ENCODE measurements at regions of chr1 and their contacts with region 1.

Region 1: GRCh38 chr1:200861937-200862647 is 10.7 kb upstream of the GPR25 start:
- DNase-seq: peak in 1 of 35 experiments; percentile 56
- ATAC-seq: peak; percentile 46 to 80 (median 48)
- H3K4me3 ChIP-seq: no peak overlapping the region
- H3K4me3 Mint-ChIP-seq: peak overlapping the region in 2 of 3 donors; percentile 1 to 31
- H3K27ac ChIP-seq: peak overlapping the region; percentile 57
- H3K27ac Mint-ChIP-seq: peak overlapping the region; percentile 41 to 85
- H3K4me1 ChIP-seq: peaks cover 0 to 22% of the 10 kb centered on the region in 2 experiments
- H3K4me1 Mint-ChIP-seq: peaks cover 10 to 45% (median 23%) of the 10 kb centered on the region in 3 donors
- H3K27me3 ChIP-seq: no peaks in the 10 kb centered on the region
- H3K27me3 Mint-ChIP-seq: no peaks in the 10 kb centered on the region

Region 2: DNA sequence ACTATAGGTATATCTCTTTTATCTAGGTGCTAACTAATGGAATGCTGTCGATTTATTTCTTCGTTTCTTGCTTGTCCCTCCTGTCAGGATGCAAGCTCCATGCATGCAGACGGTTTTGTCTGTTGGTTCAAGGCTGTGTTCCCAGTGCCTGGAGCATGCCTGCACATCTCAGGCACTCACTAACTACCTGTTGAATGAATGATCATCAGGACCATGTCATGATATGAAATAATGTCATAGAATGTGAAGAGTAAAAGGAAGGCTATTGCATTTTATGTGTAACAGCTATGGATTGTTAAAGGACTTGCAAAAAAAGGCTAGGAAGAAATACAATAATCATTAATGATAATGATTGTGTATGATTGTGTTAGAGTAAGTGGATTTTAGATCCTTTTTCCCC is 14.9 kb after region 1 on chr1:
- CTCF ChIA-PET with region 1: interaction called in 1 of 2 experiments, 6 read pairs
- POLR2A ChIA-PET with region 1: interaction called in 1 of 2 experiments, 10 read pairs
- DNase-seq: no peak
- ATAC-seq: no peak
- H3K4me3 ChIP-seq: no peak overlapping the region
- H3K4me3 Mint-ChIP-seq: peak overlapping the region in 1 of 3 donors; percentile 28
- H3K27ac ChIP-seq: no peak overlapping the region
- H3K27ac Mint-ChIP-seq: peak overlapping the region in 1 of 2 donors; percentile 88
- H3K4me1 ChIP-seq: peaks cover 6 to 53% of the 10 kb centered on the region in 2 experiments
- H3K4me1 Mint-ChIP-seq: peaks cover 38 to 67% (median 45%) of the 10 kb centered on the region in 3 donors
- H3K27me3 ChIP-seq: peaks cover under 1 to 28% of the 10 kb centered on the region in 2 experiments
- H3K27me3 Mint-ChIP-seq: peaks cover 24 to 29% of the 10 kb centered on the region in 2 donors

Region 3: GRCh38 chr1:200903793-200904192 is 41.7 kb after region 1 on chr1:
- CTCF ChIA-PET with region 1: no interaction called
- POLR2A ChIA-PET with region 1: no interaction called
- DNase-seq: peak in 1 of 35 experiments; percentile 34
- ATAC-seq: no peak
- H3K4me3 ChIP-seq: no peak overlapping the region
- H3K4me3 Mint-ChIP-seq: no peak overlapping the region
- H3K27ac ChIP-seq: no peak overlapping the region
- H3K27ac Mint-ChIP-seq: no peak overlapping the region
- H3K4me1 ChIP-seq: peaks cover 3 to 30% of the 10 kb centered on the region in 2 experiments
- H3K4me1 Mint-ChIP-seq: peaks cover 19 to 32% (median 23%) of the 10 kb centered on the region in 3 donors
- H3K27me3 ChIP-seq: peaks cover 0 to 47% of the 10 kb centered on the region in 2 experiments
- H3K27me3 Mint-ChIP-seq: peaks cover 3 to 4% of the 10 kb centered on the region in 2 donors

Region 4: GRCh38 chr1:202625416-202626360 is 1763.6 kb after region 1 on chr1:
- CTCF ChIA-PET with region 1: interaction called in 1 of 2 experiments, 12 read pairs
- POLR2A ChIA-PET with region 1: no interaction called
- DNase-seq: peak; percentile 13 to 70 (median 46)
- ATAC-seq: peak; percentile 46 to 54 (median 52)
- H3K4me3 ChIP-seq: no peak overlapping the region
- H3K4me3 Mint-ChIP-seq: no peak overlapping the region
- H3K27ac ChIP-seq: no peak overlapping the region
- H3K27ac Mint-ChIP-seq: no peak overlapping the region
- H3K4me1 ChIP-seq: peaks cover 6 to 59% of the 10 kb centered on the region in 2 experiments
- H3K4me1 Mint-ChIP-seq: peaks cover 40 to 47% (median 43%) of the 10 kb centered on the region in 3 donors
- H3K27me3 ChIP-seq: peaks cover 0 to 56% of the 10 kb centered on the region in 2 experiments
- H3K27me3 Mint-ChIP-seq: peaks cover 8% of the 10 kb centered on the region in 2 donors

Measured in T-cell (primary cell).